Gastrocnemius medialis (tissue), 4 donors: ENCODE measurements at regions of chr17 and their contacts with region 1.

Region 1: DNA sequence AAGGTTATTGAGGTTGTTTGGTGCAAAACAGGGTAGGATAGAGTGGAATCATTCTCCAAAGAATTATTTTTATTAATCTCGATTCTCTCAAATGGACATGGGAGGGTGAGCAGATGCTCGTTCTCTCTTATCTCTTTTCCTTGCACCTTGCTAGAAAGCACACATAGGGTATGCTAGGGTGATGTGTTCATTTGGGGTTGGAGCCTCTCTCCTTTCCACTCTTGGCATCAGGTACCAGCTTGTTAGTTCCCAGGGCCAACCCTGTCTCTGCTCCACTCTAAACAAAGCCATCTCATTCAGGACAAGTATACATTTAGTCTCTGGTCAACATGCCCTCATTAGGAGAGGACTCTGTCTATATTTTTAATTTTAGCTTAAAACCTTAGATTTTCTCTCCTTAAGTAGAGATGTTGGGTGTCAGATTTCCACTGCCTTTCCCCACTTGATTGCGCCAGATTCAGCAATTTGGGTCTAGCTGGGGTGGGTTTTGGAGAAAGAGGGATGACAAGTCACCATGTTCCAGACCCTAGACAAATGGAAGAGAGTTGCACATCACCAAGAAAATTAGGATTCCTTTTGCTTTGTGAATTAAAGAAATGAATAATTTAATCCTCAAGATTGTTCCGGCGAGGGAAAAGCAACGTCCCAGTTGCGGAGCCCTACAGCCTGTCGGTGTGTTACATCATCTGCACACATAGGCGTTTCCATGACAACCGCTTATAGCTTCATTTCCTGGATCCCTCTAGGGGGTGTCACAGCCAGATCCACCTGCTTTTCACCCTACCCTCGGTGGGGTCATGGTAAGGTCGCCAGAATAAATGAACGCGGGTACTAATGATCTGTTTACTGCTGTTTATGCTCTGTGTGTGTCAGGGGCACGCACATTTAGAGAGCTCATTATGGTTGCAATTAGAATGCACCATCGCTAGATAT is 41.6 kb downstream of the SNX11 start:
- DNase-seq: no peak
- ATAC-seq: no peak
- H3K4me3 ChIP-seq: no peak overlapping the region
- H3K27ac ChIP-seq: no peak overlapping the region
- H3K4me1 ChIP-seq: no peaks in the 10 kb centered on the region
- H3K27me3 ChIP-seq: peaks cover 24 to 52% (median 32%) of the 10 kb centered on the region in 3 donors
- CTCF ChIP-seq: no peak
- POLR2A ChIP-seq: no peak

Region 2: DNA sequence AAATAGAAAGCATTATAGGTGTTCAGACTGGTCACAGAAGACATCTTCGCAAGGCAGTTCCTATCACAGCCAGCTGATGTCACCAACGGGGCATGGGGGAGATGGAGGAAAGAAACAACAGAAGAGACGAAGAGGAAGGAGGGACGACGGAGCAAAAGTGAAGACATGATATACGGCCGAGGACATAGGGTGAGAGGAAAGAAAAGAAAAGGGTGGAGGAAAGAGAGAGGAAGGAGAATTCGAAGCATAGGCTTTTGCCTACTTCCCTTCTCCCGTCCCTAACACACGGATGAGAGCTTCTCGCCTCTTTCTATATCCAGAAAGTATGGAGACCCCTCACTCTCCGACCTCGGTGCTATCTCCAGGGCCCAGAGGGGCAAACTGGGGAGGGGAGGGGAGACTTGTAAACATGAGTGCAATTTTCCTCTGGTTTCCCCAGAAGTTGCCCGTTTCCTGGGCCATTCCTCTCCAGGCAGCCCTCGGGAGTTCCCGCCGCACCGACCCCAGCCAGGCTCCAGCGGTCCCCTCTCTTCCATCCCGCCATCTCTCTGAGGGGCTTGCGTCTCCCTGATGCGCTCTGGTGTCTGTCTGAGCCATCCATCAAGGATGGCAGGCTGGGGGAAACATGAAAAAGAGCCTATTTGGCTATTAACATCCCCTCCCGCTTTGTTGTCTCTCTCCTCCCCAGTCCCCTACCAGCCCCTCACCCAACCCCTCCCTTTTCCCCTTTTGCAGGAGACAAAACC is 137.5 kb before region 1 on chr17:
- in situ Hi-C with region 1: loop called in 1 of 4 experiments (anchors 10 kb)
- intact Hi-C with region 1: no loop called
- DNase-seq: no peak
- ATAC-seq: no peak
- H3K4me3 ChIP-seq: peak overlapping the region in 3 of 4 donors; percentile 21 to 56 (median 37)
- H3K27ac ChIP-seq: no peak overlapping the region
- H3K4me1 ChIP-seq: peaks cover 6% of the 10 kb centered on the region in 2 donors
- H3K27me3 ChIP-seq: peaks cover 23 to 45% (median 39%) of the 10 kb centered on the region in 3 donors
- CTCF ChIP-seq: peak in 2 of 5 experiments; percentile 16 to 52
- POLR2A ChIP-seq: no peak

Region 3: GRCh38 chr17:48215583-48216139 is 66.5 kb after region 1 on chr17:
- in situ Hi-C with region 1: no loop called
- intact Hi-C with region 1: no loop called
- DNase-seq: no peak
- ATAC-seq: no peak
- H3K4me3 ChIP-seq: no peak overlapping the region
- H3K27ac ChIP-seq: no peak overlapping the region
- H3K4me1 ChIP-seq: no peaks in the 10 kb centered on the region
- H3K27me3 ChIP-seq: peaks cover 0 to 6% (median 0%) of the 10 kb centered on the region in 3 donors
- CTCF ChIP-seq: peak in 4 of 5 experiments; percentile 11 to 45 (median 31)
- POLR2A ChIP-seq: no peak